Right ventricle myocardium inferior (tissue), 1 donor: ENCODE measurements at regions of chr20 and their contacts with region 1.

Region 1: GRCh38 chr20:38073307-38074071 is 39.9 kb downstream of the RPRD1B start:
- DNase-seq: no peak
- ATAC-seq: peak; percentile 87

Region 2: GRCh38 chr20:38113401-38114325 is 40.2 kb after region 1 on chr20:
- intact Hi-C with region 1: loop called (anchors 2 kb)
- DNase-seq: no peak
- ATAC-seq: no peak

Region 3: DNA sequence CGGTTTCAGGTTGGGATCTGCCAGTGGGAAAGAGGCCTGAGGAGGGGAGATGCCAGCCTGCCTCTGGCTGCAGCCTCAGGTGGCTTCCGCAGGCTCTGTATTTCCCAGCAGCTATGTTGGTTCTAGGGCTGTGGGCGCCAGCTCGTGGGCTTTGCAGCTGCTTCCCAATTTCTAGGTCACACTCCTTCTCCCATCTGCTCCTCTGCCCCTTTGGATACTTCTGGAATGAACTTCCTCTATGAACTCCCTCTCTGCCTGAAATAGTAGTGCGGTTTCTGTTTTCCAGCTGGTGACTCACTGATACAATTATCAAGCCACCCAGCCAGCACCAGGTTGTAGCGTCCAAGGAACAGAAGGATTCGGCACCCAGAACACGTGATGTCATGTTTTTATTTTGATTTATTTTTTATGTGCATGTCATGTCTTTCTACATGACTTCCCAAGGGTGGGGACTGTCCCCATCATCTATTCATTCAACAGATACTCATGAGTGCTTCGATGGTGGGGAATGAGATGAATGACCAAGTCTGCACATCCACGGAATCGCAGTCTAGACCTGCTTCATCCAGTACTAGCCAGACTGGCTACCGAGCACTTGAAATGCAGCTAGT is 53.6 kb after region 1 on chr20:
- intact Hi-C with region 1: loop called (anchors 5 kb)
- DNase-seq: no peak
- ATAC-seq: peak; percentile 67

Region 4: DNA sequence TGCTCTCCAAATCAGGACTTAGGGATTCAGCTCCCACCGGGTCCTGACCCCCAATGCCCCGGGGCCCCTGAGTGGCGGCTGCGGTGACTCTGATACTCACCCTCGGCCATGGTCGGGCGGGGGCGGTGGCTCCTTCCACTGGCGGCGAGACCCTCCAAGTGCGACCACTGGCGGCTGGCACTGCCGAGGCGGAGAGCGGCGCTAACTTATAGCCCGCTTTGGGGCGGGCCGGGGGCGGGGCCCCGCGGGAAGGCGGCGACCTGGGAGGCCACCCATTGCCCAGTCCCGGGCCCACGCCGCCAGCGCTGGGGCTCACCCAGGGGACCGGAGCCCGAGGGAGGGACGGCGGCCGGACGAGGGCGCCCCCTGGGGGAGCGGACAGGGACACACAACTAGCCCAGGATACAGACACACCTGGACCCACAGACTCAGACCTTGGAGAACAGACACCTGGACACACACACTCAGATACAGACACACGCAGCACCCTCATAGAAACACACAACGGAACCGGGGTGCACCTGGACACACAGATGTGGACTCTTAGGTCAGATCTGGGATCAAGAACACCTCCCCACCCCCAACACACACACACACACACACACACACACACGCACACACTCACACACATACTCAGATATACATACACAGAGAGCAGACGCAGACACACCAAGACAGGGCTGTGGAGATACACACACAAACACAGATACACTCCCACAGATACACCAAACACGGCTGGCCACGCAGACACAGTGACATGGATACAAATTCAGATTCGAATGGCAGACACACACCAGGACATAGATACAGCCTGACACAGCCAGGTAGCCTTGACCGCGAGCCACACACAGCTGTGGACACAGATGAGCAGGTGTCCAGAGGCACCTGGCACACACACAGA is 91.8 kb after region 1 on chr20 and contains the start of gene TGM2:
- intact Hi-C with region 1: loop called (anchors 1 kb)
- DNase-seq: peak; percentile 93
- ATAC-seq: peak; percentile 83
- total RNA-seq, gene TGM2: 581 TPM

Region 5: DNA sequence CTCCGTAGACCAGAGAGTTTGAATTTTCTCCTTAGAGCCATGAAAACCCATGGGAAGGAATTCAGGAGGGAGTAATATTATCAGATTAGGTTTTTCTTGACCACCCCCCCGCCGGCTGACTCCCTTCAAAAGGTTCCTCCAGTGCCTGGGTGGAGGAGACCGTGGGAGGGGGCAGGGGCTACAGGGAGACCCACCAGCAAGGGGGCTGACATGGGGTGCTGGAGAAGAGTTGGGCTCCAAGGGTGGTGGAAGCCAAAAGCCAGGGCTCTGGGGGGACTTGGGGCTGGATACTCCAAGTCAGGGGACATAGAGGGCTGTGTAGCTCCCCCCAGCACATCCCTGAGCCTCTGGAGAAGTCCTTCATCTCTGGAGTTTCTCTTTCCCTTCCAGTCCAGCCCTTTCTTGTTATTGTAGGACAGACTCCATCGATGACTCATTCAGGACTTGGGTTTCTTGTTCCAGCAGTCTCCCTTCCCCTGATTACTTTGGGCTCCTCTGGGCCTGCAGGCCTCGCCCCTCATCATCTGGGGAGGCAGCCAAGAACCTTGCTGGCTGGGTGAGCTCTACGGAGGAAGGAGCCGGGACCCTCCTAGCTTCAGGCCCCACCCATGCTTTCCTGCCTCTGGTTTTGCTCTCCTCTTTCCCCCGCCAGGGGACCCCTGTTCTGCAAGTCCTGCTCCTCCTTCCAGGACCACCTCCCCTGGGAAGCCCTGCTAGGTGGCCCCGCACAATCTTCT is 197.5 kb after region 1 on chr20:
- intact Hi-C with region 1: no loop called
- DNase-seq: peak; percentile 83
- ATAC-seq: peak; percentile 96